ENCODE measurements at regions of chr2 and their contacts with region 1.

Region 1: DNA sequence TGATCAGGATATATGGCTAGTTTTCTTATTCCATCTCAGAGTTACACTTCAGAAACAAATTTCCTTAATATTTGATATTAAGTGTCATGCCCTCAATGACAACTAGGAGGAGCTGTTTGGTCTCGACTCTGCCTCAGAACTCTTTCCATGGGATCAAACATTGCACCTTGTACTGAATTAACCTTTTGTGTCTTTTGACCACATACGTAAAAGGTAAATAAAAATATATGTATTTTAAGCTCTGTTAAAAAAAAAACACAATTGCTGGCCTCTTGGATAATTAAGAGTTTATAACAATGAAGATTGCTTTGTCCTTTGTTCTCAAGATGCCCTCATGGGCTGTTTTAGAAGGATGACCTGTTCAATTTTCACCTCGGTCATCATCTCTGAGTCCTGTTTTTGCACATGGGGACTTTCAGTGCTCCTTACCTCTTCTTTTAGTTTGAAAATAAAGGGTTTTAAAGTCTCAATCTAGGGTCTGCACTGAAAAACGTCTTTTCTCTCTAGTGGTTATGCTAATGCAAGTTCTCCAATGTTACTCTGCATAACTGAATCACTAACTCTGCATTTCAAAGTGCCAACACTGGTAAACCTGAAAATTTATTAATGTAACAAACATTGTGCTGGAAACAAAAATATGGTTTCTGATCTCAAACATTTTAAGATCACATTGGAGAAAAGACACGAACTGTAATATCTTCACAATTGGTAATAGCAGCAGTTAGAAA is 18.8 kb upstream of the FN1 start:
- DNase-seq: peak; percentile 70
- ATAC-seq: peak; percentile 37
- H3K4me3 ChIP-seq: no peak overlapping the region
- H3K27ac ChIP-seq: no peak overlapping the region
- H3K4me1 ChIP-seq: 0 out of 2 replicates have a peak, but pooled peaks cover 7% of the 10 kb centered on the region
- H3K27me3 ChIP-seq: no peaks in the 10 kb centered on the region
- CTCF ChIP-seq: peak; percentile 88

Region 2: GRCh38 chr2:215423928-215424540 is 30.6 kb before region 1 on chr2:
- CTCF ChIA-PET with region 1: no interaction called
- POLR2A ChIA-PET with region 1: no interaction called
- intact Hi-C with region 1: loop called (anchors 1 kb)
- DNase-seq: no peak
- ATAC-seq: no peak
- H3K4me3 ChIP-seq: no peak overlapping the region
- H3K27ac ChIP-seq: no peak overlapping the region
- H3K4me1 ChIP-seq: peaks cover 4% of the 10 kb centered on the region
- H3K27me3 ChIP-seq: no peaks in the 10 kb centered on the region
- CTCF ChIP-seq: no peak

Measured in PC-3 (cell line).